Panc1 (cell line): ENCODE measurements at regions of chr16 and their contacts with region 1.

Region 1: DNA sequence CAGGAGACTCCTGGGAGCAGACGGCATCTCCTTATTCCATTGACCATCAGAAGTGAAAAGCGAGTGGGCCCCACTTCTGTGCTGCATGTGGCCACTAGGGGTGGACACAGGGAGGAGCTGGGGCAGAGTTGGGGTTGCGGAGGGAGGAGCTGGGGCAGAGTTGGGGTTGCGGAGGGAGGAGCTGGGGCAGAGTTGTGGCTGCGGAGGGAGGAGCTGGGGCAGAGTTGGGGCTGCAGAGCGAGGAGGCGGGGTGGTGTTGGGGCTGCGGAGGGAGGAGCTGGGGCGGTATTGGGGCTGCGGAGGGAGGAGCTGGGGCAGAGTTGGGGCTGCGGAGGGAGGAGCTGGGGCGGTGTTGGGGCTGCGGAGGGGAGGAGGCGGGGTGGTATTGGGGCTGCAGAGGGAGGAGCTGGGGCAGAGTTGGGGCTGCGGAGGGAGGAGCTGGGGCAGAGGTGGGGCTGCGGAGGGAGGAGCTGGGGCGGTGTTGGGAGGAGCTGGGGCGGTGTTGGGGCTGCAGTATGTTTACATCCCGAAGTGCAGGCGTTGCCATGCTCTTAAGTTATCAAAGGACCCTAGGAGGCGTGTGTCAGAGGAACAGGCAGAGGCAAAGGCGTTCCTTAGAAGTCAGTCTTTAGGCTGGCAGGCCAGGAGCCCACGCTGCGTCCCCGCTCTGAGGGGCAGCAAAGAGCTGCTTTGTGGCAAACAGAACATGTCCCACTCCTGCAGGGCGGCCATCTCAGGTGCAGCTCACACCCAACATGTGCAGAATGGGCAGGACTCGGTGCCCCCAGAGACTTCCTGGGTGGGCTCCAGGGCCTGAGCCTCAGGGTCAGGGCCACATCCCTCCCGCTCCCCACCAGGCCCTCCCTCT is 76.0 kb downstream of the ZNF778 start:
- DNase-seq: no peak
- ATAC-seq: peak; percentile 43
- H3K4me3 ChIP-seq: no peak overlapping the region
- H3K27ac ChIP-seq: no peak overlapping the region
- H3K4me1 ChIP-seq: peaks cover 43% of the 10 kb centered on the region
- H3K27me3 ChIP-seq: no peaks in the 10 kb centered on the region
- CTCF ChIP-seq: no peak; the same call in 1 of the 2 replicates

Region 2: GRCh38 chr16:89322321-89323119 is 29.0 kb after region 1 on chr16:
- CTCF ChIA-PET with region 1: no interaction called
- POLR2A ChIA-PET with region 1: interaction called, 12 read pairs
- in situ Hi-C with region 1: no loop called
- intact Hi-C with region 1: no loop called
- DNase-seq: no peak
- ATAC-seq: peak; percentile 49
- H3K4me3 ChIP-seq: peak overlapping the region in 1 of 2 experiments; percentile 15; a peak in 1 of 4 replicates
- H3K27ac ChIP-seq: peak overlapping the region; percentile 93
- H3K4me1 ChIP-seq: peaks cover 93% of the 10 kb centered on the region
- H3K27me3 ChIP-seq: no peaks in the 10 kb centered on the region
- CTCF ChIP-seq: no peak

Region 3: GRCh38 chr16:89375021-89375420 is 81.5 kb after region 1 on chr16:
- CTCF ChIA-PET with region 1: interaction called, 5 read pairs
- POLR2A ChIA-PET with region 1: interaction called, 25 read pairs
- in situ Hi-C with region 1: no loop called
- intact Hi-C with region 1: no loop called
- DNase-seq: no peak
- ATAC-seq: peak; percentile 51
- H3K4me3 ChIP-seq: no peak overlapping the region
- H3K27ac ChIP-seq: no peak overlapping the region; the same call in 1 of the 2 replicates
- H3K4me1 ChIP-seq: peaks cover 66% of the 10 kb centered on the region
- H3K27me3 ChIP-seq: no peaks in the 10 kb centered on the region
- CTCF ChIP-seq: no peak

Region 4: GRCh38 chr16:89560378-89561141 is 267.1 kb after region 1 on chr16 and contains the start of gene RPL13:
- CTCF ChIA-PET with region 1: no interaction called
- POLR2A ChIA-PET with region 1: interaction called, 20 read pairs
- in situ Hi-C with region 1: no loop called
- intact Hi-C with region 1: no loop called
- DNase-seq: no peak
- ATAC-seq: peak; percentile 83
- H3K4me3 ChIP-seq: peak within 1 kb of the TSS; percentile 76 to 92
- H3K27ac ChIP-seq: peak within 1 kb of the TSS; percentile 93
- H3K4me1 ChIP-seq: peaks cover 21% of the 10 kb centered on the region
- H3K27me3 ChIP-seq: no peaks in the 10 kb centered on the region
- CTCF ChIP-seq: 0 out of 2 replicates have a peak, but pooled peaks have one; percentile 30
- total RNA-seq, gene RPL13: 965 TPM

Region 5: GRCh38 chr16:89633064-89633631 is 339.6 kb after region 1 on chr16:
- CTCF ChIA-PET with region 1: no interaction called
- POLR2A ChIA-PET with region 1: interaction called, 11 read pairs
- in situ Hi-C with region 1: no loop called
- intact Hi-C with region 1: no loop called
- DNase-seq: no peak
- ATAC-seq: peak; percentile 83
- H3K4me3 ChIP-seq: peak overlapping the region in 1 of 2 experiments; percentile 29; a peak in 2 of 4 replicates
- H3K27ac ChIP-seq: no peak overlapping the region
- H3K4me1 ChIP-seq: no peaks in the 10 kb centered on the region; the same call in 1 of the 2 replicates
- H3K27me3 ChIP-seq: peaks cover 4% of the 10 kb centered on the region
- CTCF ChIP-seq: no peak